Activated naive CD4-positive, alpha-beta T cell treated with anti-CD3 and anti-CD28 coated beads for 36 hours (primary cell): ENCODE measurements at regions of chr17 and their contacts with region 1.

Region 1: DNA sequence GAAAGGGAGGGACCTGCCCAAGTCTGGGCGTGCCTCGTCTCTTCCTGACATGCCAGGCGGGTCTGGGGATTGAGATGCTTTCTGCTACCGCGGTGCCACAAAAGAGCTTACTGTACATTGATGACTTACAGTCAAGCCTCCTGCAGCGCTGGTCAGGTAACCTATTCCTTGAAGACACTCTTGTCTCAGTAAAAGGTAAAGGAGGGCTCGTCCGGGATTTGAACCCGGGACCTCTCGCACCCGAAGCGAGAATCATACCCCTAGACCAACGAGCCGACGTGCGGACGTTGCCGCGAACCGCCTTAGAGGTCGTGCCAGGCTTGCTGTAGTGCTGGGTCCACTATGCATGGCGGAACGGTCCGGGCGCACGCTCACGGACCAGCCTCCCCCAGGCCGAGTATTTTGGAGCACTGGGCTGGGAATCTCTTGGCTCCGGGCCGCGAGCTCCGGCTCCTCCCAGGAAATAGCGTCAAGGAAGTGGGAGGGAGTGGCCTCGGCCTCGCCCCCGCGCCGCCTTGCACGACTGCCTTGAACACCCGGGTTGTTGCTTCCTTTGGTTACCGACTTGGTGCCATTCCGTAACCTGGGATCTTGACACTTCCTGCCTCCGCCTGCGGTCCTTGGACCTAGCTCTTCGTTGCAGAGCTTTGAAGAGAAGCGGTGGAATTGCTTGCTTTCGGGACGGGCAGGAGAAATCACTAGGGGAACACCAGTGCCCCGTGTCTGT is 12.4 kb upstream of the AURKB start:
- DNase-seq: peak; percentile 94
- H3K4me3 Mint-ChIP-seq: peak overlapping the region; percentile 96
- H3K27ac Mint-ChIP-seq: peak overlapping the region; percentile 96
- H3K4me1 Mint-ChIP-seq: peaks cover 37% of the 10 kb centered on the region
- H3K27me3 Mint-ChIP-seq: peaks cover 15% of the 10 kb centered on the region

Region 2: DNA sequence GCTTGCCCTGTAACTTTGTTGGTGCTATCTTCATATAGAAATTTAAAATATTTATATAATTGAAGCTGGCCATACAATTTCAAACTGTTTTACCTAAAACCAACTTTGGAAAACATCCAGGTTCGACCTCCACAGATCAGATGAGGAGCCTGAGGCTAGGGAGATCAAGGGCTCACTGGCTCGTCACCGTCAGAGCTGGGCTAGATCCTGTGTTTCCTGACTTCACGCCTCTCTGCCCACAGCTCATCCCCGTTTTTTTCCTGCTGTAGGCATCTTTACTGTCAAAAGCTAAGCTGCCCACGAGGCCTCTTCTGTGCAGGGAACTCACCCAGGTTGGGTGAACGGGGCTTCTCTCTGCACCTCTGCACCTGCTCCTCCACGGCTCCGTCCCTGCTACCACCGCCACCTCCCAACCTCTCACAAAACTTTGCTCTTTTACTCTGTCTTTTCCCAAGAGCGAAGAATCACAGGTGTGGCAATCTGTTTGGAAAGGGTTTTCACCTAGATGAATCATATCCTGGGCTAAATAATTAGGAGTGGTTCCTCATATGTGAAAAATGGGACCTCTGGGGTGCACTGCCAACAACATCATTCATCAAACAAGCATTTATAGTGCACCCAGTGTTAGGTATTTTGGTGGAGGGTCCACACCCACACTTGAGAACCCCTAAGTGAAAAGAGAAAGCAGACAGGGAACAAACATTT is 413.6 kb before region 1 on chr17:
- CTCF ChIA-PET with region 1: no interaction called
- intact Hi-C with region 1: no loop called
- DNase-seq: no peak
- H3K4me3 Mint-ChIP-seq: no peak overlapping the region
- H3K27ac Mint-ChIP-seq: no peak overlapping the region
- H3K4me1 Mint-ChIP-seq: peaks cover 5% of the 10 kb centered on the region
- H3K27me3 Mint-ChIP-seq: peaks cover 3% of the 10 kb centered on the region

Region 3: GRCh38 chr17:8138672-8139371 is 84.0 kb before region 1 on chr17:
- CTCF ChIA-PET with region 1: interaction called, 4 read pairs
- intact Hi-C with region 1: loop called (anchors 1 kb)
- DNase-seq: peak; percentile 98
- H3K4me3 Mint-ChIP-seq: no peak overlapping the region
- H3K27ac Mint-ChIP-seq: no peak overlapping the region
- H3K4me1 Mint-ChIP-seq: peaks cover 13% of the 10 kb centered on the region
- H3K27me3 Mint-ChIP-seq: no peaks in the 10 kb centered on the region

Region 4: GRCh38 chr17:8173056-8173870 is 49.5 kb before region 1 on chr17:
- CTCF ChIA-PET with region 1: interaction called, 3 read pairs
- intact Hi-C with region 1: loop called (anchors 1 kb)
- DNase-seq: peak; percentile 90
- H3K4me3 Mint-ChIP-seq: peak overlapping the region; percentile 69
- H3K27ac Mint-ChIP-seq: peak overlapping the region; percentile 100
- H3K4me1 Mint-ChIP-seq: peaks cover 40% of the 10 kb centered on the region
- H3K27me3 Mint-ChIP-seq: peaks cover 4% of the 10 kb centered on the region

Region 5: DNA sequence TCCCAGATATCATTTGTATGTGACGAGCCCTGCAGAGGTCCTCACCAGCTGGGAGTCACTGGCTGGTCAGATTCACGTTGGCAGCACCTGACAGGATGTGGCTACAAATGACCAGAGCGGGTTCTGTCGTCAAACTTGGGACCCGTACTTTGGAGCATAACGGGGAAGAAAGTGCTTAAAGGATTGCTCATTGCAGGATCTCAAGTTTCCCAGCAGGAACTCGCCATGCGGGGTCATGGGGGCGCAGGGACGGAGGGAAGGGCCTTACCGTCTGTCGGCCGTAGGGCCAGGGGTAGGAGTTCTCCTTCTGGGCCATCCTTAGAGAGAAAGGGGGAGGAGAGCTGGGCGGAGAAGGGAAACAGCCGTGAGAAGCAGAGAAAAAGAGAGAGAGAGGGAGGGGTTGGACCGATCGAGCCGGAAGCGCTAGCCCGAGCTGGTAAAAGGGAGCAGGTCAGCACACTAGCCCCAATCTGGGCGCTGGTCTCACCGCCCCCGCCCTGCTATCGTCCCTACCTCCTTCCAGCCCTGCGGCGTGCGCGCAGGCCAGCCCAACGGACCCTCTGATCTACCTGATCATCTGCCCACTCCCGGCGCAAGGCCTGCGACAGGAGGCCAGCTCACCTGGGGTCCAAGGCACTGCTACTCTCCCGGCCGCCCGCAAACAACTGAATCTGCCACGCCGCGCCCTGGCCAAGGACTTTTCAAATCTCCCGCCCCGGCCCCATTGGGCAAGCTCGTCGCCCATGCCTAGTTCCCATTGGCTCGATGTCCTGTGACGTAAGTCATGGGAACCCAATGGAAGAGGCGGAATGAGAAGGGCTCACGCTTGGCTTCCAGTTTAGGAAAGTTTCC is 12.7 kb before region 1 on chr17 and contains the start of gene AURKB:
- CTCF ChIA-PET with region 1: interaction called, 7 read pairs
- intact Hi-C with region 1: loop called (anchors 1 kb)
- DNase-seq: peak; percentile 98
- H3K4me3 Mint-ChIP-seq: peak within 1 kb of the TSS; percentile 99
- H3K27ac Mint-ChIP-seq: peak within 1 kb of the TSS; percentile 94
- H3K4me1 Mint-ChIP-seq: peaks cover 16% of the 10 kb centered on the region
- H3K27me3 Mint-ChIP-seq: no peaks in the 10 kb centered on the region
- total RNA-seq, gene AURKB: 243 TPM

Region 6: DNA sequence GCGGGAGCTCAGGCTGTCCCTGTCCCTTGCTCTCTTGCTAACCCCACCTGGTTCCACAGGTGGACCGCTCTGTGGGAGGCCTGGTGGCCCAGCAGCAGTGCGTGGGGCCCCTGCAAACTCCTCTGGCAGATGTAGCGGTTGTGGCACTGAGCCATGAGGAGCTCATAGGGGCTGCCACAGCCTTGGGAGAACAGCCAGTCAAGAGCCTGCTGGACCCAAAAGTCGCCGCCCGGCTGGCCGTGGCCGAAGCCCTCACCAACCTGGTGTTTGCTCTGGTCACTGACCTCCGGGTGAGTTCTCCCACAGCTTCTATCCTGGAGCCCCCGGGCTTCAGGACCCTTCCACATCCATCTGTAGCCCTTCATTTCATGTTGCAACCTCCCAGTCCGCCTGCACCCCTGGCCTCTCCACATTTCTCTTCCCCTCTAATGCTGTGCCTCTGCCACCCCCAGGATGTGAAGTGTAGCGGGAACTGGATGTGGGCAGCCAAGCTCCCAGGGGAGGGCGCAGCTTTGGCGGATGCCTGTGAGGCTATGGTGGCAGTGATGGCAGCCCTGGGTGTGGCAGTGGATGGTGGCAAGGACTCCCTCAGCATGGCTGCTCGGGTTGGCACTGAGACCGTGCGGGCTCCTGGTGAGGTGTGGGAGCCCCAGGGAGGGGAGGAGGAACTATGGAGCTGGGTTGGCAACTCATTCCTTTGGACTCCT is 42.2 kb after region 1 on chr17:
- CTCF ChIA-PET with region 1: no interaction called
- intact Hi-C with region 1: no loop called
- DNase-seq: no peak
- H3K4me3 Mint-ChIP-seq: no peak overlapping the region
- H3K27ac Mint-ChIP-seq: no peak overlapping the region
- H3K4me1 Mint-ChIP-seq: no peaks in the 10 kb centered on the region
- H3K27me3 Mint-ChIP-seq: no peaks in the 10 kb centered on the region

Region 7: GRCh38 chr17:8288336-8289102 is 65.7 kb after region 1 on chr17 and contains the start of gene RANGRF:
- CTCF ChIA-PET with region 1: interaction called, 3 read pairs
- intact Hi-C with region 1: loop called (anchors 1 kb)
- DNase-seq: peak; percentile 91
- H3K4me3 Mint-ChIP-seq: peak within 1 kb of the TSS; percentile 88
- H3K27ac Mint-ChIP-seq: peak within 1 kb of the TSS; percentile 93
- H3K4me1 Mint-ChIP-seq: peaks cover 25% of the 10 kb centered on the region
- H3K27me3 Mint-ChIP-seq: no peaks in the 10 kb centered on the region
- total RNA-seq, gene RANGRF: 36.9 to 39.1 TPM

Region 8: DNA sequence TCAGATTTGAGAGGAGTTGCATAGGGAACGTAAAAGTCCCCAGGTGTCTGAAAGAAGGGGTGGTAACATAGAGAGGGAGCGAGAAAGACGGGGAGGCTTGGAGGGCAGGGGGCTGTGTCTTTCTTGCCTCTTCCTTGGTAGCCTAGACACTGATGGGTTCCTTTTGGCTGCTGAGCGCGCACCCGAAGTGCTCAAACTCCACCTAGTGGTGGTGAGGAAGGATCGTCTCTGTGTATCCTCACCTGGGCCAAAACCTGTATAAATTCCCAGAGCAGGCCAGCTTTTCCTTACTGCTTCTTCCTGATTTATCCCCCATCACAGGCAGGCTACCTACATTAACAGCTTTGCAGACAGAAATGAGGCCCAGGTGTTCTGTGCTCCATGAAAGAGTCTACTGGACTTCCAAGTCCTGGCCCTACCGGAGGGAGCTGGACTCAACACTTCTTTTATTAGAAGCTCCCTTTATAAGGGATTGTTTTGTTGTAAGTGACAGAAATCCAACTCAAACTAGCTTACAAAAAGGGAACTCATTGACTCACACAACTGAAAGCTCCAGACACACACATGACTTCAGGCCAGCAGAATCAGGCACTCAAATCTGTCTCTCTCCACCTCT is 77.9 kb after region 1 on chr17:
- CTCF ChIA-PET with region 1: interaction called, 5 read pairs
- intact Hi-C with region 1: loop called (anchors 1 kb)
- DNase-seq: peak; percentile 67
- H3K4me3 Mint-ChIP-seq: no peak overlapping the region
- H3K27ac Mint-ChIP-seq: no peak overlapping the region
- H3K4me1 Mint-ChIP-seq: peaks cover 7% of the 10 kb centered on the region
- H3K27me3 Mint-ChIP-seq: no peaks in the 10 kb centered on the region